Esophagus muscularis mucosa (tissue), 4 donors: ENCODE measurements at regions of chr9 and their contacts with region 1.

Region 1: GRCh38 chr9:93978551-93978950 is 23.4 kb upstream of the BARX1 start:
- DNase-seq: peak; percentile 50
- H3K4me3 ChIP-seq: no peak overlapping the region
- H3K27ac ChIP-seq: no peak overlapping the region
- H3K4me1 ChIP-seq: no peaks in the 10 kb centered on the region
- H3K27me3 ChIP-seq: peaks cover 0 to 9% (median 0%) of the 10 kb centered on the region in 4 donors
- CTCF ChIP-seq: no peak
- EP300 ChIP-seq: no peak
- POLR2A ChIP-seq: no peak

Region 2: GRCh38 chr9:93427655-93428379 is 550.7 kb before region 1 on chr9:
- intact Hi-C with region 1: loop called (anchors 5 kb)
- DNase-seq: no peak
- H3K4me3 ChIP-seq: no peak overlapping the region
- H3K27ac ChIP-seq: no peak overlapping the region
- H3K4me1 ChIP-seq: peaks cover 0 to 8% (median 5%) of the 10 kb centered on the region in 4 donors
- H3K27me3 ChIP-seq: no peaks in the 10 kb centered on the region
- CTCF ChIP-seq: no peak
- EP300 ChIP-seq: no peak
- POLR2A ChIP-seq: no peak

Region 3: GRCh38 chr9:94472806-94473360 is 494.3 kb after region 1 on chr9:
- intact Hi-C with region 1: no loop called
- DNase-seq: no peak
- H3K4me3 ChIP-seq: no peak overlapping the region
- H3K27ac ChIP-seq: no peak overlapping the region
- H3K4me1 ChIP-seq: no peaks in the 10 kb centered on the region
- H3K27me3 ChIP-seq: no peaks in the 10 kb centered on the region
- CTCF ChIP-seq: no peak
- EP300 ChIP-seq: no peak
- POLR2A ChIP-seq: no peak